H1 (cell line): ENCODE measurements at regions of chr4 and their contacts with region 1.

Region 1: GRCh38 chr4:105666693-105667092 is 41.8 kb downstream of the INTS12 start:
- DNase-seq: no peak
- H3K4me3 ChIP-seq: no peak overlapping the region
- H3K27ac ChIP-seq: no peak overlapping the region
- H3K4me1 ChIP-seq: no peaks in the 10 kb centered on the region
- H3K27me3 ChIP-seq: peaks cover 0 to 1% (median 0%) of the 10 kb centered on the region in 4 experiments; a peak in 1 of 7 replicates
- CTCF ChIP-seq: peak in 2 of 3 experiments; percentile 37 to 41; a peak in 2 of 4 replicates
- EP300 ChIP-seq: no peak
- POLR2A ChIP-seq: no peak
- RAD21 ChIP-seq: peak; percentile 61 to 67

Region 2: GRCh38 chr4:105496899-105497298 is 169.8 kb before region 1 on chr4:
- CTCF ChIA-PET with region 1: interaction called, 11 read pairs
- POLR2A ChIA-PET with region 1: no interaction called
- DNase-seq: no peak
- H3K4me3 ChIP-seq: no peak overlapping the region
- H3K27ac ChIP-seq: no peak overlapping the region
- H3K4me1 ChIP-seq: no peaks in the 10 kb centered on the region
- H3K27me3 ChIP-seq: no peaks in the 10 kb centered on the region
- CTCF ChIP-seq: peak; percentile 30 to 39 (median 37); a peak in 3 of 4 replicates
- EP300 ChIP-seq: no peak
- POLR2A ChIP-seq: no peak
- RAD21 ChIP-seq: peak; percentile 57 to 63

Region 3: DNA sequence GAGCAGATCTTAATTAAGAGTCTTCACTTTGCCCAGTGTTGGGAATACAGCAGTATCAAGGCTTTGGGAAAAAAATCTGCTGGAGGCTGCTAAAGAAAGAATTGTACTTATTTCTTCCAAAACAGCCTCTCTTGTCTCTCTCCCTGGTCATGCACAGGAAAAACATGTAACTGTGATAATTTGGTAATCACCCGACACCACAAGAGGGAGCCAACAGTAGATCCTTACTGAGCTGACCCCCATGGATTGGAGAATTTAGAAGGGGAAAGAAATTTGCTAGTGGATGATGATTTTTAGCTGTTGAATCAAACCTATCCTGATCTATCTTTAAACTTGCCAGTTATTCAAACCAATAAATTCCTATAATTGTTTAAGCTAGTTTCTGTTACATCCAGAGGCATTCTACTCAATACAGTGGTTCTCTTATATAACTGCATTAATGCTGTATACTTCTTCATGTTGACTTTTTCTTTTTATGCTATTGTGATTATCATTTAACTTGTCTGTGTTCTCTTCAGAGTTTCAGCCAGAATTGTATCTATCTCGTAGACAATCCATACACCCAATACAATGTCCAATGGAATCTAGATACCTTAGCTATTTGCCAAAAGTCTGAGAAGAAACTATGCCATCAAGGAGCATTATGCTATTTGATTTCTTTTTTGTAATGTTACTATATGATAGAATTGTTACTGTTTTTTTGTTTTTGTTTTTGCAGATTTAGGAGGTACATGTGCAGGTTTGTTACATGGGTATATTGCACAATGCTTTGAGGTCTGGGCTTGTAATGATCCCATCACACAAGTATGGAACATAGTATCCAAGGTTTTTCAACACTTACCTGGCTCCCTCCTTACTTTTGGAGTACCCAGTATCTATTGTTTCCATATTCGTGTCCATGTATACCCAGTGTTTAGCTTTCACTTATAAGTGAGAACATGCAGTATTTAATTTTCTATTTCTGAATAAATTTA is 145.6 kb before region 1 on chr4:
- CTCF ChIA-PET with region 1: interaction called, 26 read pairs
- POLR2A ChIA-PET with region 1: no interaction called
- DNase-seq: no peak
- H3K4me3 ChIP-seq: no peak overlapping the region
- H3K27ac ChIP-seq: no peak overlapping the region
- H3K4me1 ChIP-seq: no peaks in the 10 kb centered on the region
- H3K27me3 ChIP-seq: no peaks in the 10 kb centered on the region
- CTCF ChIP-seq: peak in 2 of 3 experiments; percentile 65 to 73; a peak in 3 of 4 replicates
- EP300 ChIP-seq: no peak
- POLR2A ChIP-seq: no peak
- RAD21 ChIP-seq: peak; percentile 78 to 80

Region 4: GRCh38 chr4:105631818-105632400 is 34.8 kb before region 1 on chr4:
- CTCF ChIA-PET with region 1: interaction called, 28 read pairs
- POLR2A ChIA-PET with region 1: no interaction called
- DNase-seq: no peak
- H3K4me3 ChIP-seq: no peak overlapping the region
- H3K27ac ChIP-seq: no peak overlapping the region
- H3K4me1 ChIP-seq: no peaks in the 10 kb centered on the region
- H3K27me3 ChIP-seq: no peaks in the 10 kb centered on the region
- CTCF ChIP-seq: no peak; a peak in 1 of 4 replicates
- EP300 ChIP-seq: no peak
- POLR2A ChIP-seq: no peak
- RAD21 ChIP-seq: 0 out of 4 replicates have a peak, but pooled peaks of 1 of the 2 experiments have one; percentile 4

Region 5: DNA sequence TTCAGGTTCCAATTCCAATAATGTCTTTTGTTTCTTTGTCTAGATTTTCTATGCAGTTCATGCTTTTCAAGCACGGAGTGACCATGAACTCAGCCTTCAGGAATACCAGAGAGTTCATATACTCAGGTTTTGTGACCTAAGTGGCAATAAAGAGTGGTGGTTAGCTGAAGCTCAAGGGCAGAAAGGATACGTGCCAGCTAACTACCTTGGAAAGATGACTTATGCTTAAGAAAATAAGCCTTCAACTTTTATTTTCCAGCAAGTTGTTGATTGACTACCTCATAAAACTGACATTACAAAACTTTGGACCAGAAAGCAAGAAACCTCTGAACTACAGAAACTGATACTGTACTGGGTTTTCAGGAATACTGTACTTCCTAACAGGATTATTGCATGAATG is 11.0 kb after region 1 on chr4:
- CTCF ChIA-PET with region 1: interaction called, 19 read pairs
- POLR2A ChIA-PET with region 1: no interaction called
- DNase-seq: no peak
- H3K4me3 ChIP-seq: no peak overlapping the region
- H3K27ac ChIP-seq: no peak overlapping the region
- H3K4me1 ChIP-seq: peaks cover 0 to 3% (median 0%) of the 10 kb centered on the region in 4 experiments; a peak in 1 of 7 replicates
- H3K27me3 ChIP-seq: no peaks in the 10 kb centered on the region
- CTCF ChIP-seq: no peak
- EP300 ChIP-seq: no peak
- POLR2A ChIP-seq: no peak
- RAD21 ChIP-seq: no peak